ENCODE measurements at regions of chr2 and their contacts with region 1.

Region 1: DNA sequence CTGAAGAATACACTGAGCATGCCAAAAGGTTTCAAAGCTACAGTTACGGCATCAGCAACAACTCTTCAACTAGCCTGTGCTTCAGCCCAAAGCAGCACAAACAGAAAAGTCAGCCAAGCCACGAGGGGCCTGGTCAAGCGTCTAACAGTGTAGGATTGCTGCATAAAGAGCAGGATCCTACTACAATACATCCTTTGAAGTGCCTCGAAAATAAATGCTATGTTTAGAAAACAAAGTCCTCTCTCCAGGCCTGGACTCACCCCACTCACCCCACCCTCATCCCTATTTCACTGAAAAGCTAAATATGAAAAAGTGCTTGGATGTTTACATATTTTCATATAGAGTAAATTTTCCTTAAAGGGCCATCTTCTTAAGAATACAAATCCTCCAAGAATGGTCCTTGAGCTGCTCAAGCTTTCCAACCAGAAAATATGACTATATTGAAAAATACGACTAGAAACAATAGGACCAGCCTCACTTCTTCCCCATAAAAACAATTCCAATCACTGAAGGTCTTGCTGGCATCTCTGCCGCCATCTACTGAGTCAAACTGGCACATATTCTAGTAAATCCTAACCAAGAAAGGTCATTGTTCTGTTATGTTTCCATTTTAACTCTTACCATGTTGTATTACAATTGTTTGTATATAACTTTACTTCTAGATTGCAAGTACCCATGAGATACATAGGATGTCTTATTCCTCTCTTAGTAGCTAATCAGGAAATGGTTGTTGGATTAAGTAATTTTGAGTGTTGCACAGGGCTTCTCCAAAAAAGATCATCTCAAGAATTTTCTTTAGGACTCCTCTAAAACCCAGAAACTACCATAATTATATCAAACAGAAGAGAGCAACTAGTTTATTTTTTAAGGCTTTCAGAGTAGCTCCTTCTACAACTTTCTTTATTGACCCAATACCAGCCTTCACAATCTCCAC is 63.6 kb downstream of the CLHC1 start:
- DNase-seq: peak; percentile 52
- H3K4me3 ChIP-seq: peak overlapping the region in 1 of 2 experiments; percentile 6; a peak in 1 of 4 replicates
- H3K27ac ChIP-seq: peak overlapping the region; percentile 64 to 76
- H3K4me1 ChIP-seq: peaks cover 15 to 36% of the 10 kb centered on the region in 2 experiments
- H3K27me3 ChIP-seq: no peaks in the 10 kb centered on the region
- CTCF ChIP-seq: peak; percentile 90
- EP300 ChIP-seq: peak in 1 of 2 experiments; percentile 32; a peak in 1 of 4 replicates
- RAD21 ChIP-seq: peak; percentile 96

Region 2: DNA sequence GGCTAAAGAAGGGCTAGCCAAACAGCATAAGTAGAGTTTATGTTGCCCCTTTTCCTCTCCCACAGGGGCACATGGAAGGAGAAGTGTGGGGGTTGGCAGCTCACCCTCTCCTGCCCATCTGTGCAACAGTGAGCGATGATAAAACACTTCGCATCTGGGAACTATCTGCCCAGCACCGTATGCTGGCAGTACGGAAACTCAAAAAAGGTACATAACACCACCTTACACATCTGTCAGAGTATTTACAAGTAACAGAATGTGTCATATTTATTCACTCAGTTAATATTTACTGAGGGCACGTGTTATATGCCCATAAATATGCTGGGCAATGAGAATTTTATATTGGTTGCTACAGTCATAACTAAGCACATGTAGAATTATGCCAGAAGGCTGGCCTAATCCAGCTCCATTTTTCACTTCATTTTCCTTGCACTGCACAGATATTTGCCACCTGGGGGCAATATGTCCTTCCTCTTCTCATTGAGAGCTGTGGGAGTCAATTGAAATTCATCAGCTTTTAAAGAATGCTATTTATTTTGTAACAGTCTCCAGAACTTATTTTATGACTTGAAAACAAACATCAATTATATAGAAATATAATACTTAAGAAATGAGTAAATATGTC is 268.8 kb before region 1 on chr2:
- CTCF ChIA-PET with region 1: interaction called, 35 read pairs
- POLR2A ChIA-PET with region 1: no interaction called
- DNase-seq: peak; percentile 27
- H3K4me3 ChIP-seq: no peak overlapping the region
- H3K27ac ChIP-seq: no peak overlapping the region
- H3K4me1 ChIP-seq: peaks cover 13 to 14% of the 10 kb centered on the region in 2 experiments
- H3K27me3 ChIP-seq: no peaks in the 10 kb centered on the region
- CTCF ChIP-seq: peak; percentile 76
- EP300 ChIP-seq: no peak
- RAD21 ChIP-seq: peak; percentile 74

Region 3: DNA sequence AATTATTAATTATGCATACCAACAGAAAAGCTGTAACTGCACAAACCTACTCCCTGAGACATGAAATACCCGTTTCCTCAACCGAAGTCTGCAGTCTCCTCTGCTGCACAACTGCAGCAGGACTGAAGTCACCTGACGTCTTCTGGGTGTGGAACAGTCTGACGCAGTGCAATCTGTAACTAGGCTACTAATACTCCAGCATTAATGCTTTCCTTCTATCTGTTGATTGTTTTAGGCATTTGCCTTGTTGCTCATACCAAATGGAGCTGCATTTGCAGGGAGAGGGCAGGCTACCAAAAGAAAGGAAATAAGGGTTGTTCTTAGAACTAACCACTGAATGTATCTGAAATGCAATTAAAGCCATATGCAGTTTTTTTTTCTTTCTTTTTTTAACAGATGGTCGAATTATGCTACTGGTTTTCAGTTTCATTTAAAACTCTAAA is 158.3 kb before region 1 on chr2:
- CTCF ChIA-PET with region 1: interaction called, 215 read pairs
- POLR2A ChIA-PET with region 1: no interaction called
- DNase-seq: no peak
- H3K4me3 ChIP-seq: peak overlapping the region in 1 of 2 experiments; percentile 1; a peak in 1 of 4 replicates
- H3K27ac ChIP-seq: peak overlapping the region in 1 of 2 experiments; percentile 43; a peak in 2 of 4 replicates
- H3K4me1 ChIP-seq: peaks cover 28 to 83% of the 10 kb centered on the region in 2 experiments; a peak in 3 of 4 replicates
- H3K27me3 ChIP-seq: no peaks in the 10 kb centered on the region
- CTCF ChIP-seq: no peak
- EP300 ChIP-seq: no peak
- RAD21 ChIP-seq: no peak

Region 4: GRCh38 chr2:55157474-55157884 is 11.0 kb before region 1 on chr2:
- CTCF ChIA-PET with region 1: interaction called, 13 read pairs
- POLR2A ChIA-PET with region 1: interaction called, 3 read pairs
- DNase-seq: peak; percentile 37
- H3K4me3 ChIP-seq: no peak overlapping the region; a peak in 1 of 4 replicates
- H3K27ac ChIP-seq: peak overlapping the region; percentile 90 to 96
- H3K4me1 ChIP-seq: peaks cover 29 to 44% of the 10 kb centered on the region in 2 experiments
- H3K27me3 ChIP-seq: no peaks in the 10 kb centered on the region
- CTCF ChIP-seq: peak; percentile 22; the same call in 1 of the 2 replicates
- EP300 ChIP-seq: no peak
- RAD21 ChIP-seq: no peak